ENCODE measurements at regions of chr16 and their contacts with region 1.

Region 1: DNA sequence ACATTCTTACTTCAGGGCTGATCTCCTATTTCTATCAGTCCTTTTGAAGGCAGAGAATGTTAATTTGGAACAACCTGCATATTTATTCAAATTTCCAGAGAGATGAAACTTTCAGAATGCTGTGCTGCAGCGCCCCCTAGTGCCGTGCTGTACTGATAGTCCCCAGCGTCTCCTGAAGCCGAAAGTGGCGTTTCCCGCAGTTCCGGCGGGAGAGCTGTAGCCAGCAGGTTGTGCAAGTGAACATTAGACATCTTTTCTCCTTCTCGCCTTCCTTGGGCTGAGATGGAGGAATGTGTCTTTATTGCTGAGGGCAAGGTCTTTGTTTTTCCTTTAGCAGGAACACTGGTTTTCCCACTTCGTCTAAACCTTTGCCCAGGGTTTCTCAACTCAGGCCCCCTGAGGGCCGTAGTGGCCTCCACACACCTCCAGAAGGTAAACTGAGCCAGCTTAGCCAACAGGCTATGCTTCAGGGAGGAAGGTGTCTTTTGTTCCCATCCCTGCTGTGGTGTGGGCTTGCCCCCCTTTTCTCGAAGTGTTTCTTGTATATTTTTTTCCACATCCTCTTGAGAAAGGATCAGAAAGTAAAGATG is 26.4 kb downstream of the USP10 start:
- DNase-seq: peak; percentile 92
- ATAC-seq: peak; percentile 60
- H3K4me3 Mint-ChIP-seq: peak overlapping the region; percentile 48
- H3K27ac Mint-ChIP-seq: peak overlapping the region; percentile 58
- H3K4me1 Mint-ChIP-seq: peaks cover 83% of the 10 kb centered on the region
- H3K27me3 Mint-ChIP-seq: no peaks in the 10 kb centered on the region

Region 2: GRCh38 chr16:84277237-84277823 is 448.8 kb before region 1 on chr16:
- CTCF ChIA-PET with region 1: interaction called, 3 read pairs
- POLR2A ChIA-PET with region 1: no interaction called
- intact Hi-C with region 1: loop called in 1 of 2 experiments (anchors 5 kb)
- DNase-seq: peak; percentile 86
- ATAC-seq: peak; percentile 73
- H3K4me3 Mint-ChIP-seq: no peak overlapping the region
- H3K27ac Mint-ChIP-seq: no peak overlapping the region
- H3K4me1 Mint-ChIP-seq: no peaks in the 10 kb centered on the region
- H3K27me3 Mint-ChIP-seq: peaks cover 2% of the 10 kb centered on the region

Region 3: GRCh38 chr16:84487358-84487757 is 238.8 kb before region 1 on chr16:
- CTCF ChIA-PET with region 1: no interaction called
- POLR2A ChIA-PET with region 1: no interaction called
- intact Hi-C with region 1: no loop called
- DNase-seq: no peak
- ATAC-seq: no peak
- H3K4me3 Mint-ChIP-seq: no peak overlapping the region
- H3K27ac Mint-ChIP-seq: no peak overlapping the region
- H3K4me1 Mint-ChIP-seq: no peaks in the 10 kb centered on the region
- H3K27me3 Mint-ChIP-seq: no peaks in the 10 kb centered on the region

Region 4: DNA sequence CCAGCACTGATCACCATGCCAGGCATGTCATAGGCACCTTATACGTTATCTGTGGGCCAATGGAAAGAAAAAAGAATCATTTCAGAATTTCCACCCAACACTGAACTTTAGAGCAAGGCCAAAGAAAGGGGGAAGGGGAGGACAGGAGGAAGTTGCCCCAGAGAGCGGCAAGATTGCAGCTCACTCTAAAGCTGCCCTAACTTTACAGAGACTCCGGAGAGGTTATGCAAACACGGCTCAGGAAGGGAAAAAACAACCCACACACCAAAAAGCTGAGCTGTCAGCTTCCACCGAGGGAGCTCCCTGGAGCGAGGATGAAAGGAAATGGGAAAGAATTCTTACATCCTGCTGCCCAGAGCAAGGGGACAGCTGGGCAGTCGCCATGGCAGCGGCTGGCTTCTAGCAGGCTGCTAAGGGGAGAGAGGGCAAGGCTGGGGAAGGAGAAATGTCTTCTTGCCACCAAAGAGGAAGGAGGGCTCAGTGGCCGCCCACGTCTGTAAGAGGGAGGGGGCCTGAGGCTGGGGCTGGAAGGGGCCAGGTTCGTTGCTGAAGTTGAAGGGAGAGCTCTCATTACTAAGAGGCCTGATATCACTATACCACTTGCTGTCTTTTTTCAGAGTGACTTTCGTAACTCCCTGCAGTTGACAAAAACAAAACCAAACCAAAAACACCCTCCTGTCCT is 126.5 kb before region 1 on chr16:
- CTCF ChIA-PET with region 1: interaction called, 10 read pairs
- POLR2A ChIA-PET with region 1: no interaction called
- intact Hi-C with region 1: no loop called
- DNase-seq: peak; percentile 90
- ATAC-seq: peak; percentile 58
- H3K4me3 Mint-ChIP-seq: peak overlapping the region; percentile 74
- H3K27ac Mint-ChIP-seq: peak overlapping the region; percentile 97
- H3K4me1 Mint-ChIP-seq: peaks cover 94% of the 10 kb centered on the region
- H3K27me3 Mint-ChIP-seq: no peaks in the 10 kb centered on the region

Region 5: GRCh38 chr16:84672276-84673202 is 53.6 kb before region 1 on chr16:
- CTCF ChIA-PET with region 1: interaction called, 80 read pairs
- POLR2A ChIA-PET with region 1: no interaction called
- intact Hi-C with region 1: loop called (anchors 1 kb)
- DNase-seq: peak; percentile 91
- ATAC-seq: peak; percentile 96
- H3K4me3 Mint-ChIP-seq: no peak overlapping the region
- H3K27ac Mint-ChIP-seq: no peak overlapping the region
- H3K4me1 Mint-ChIP-seq: peaks cover 7% of the 10 kb centered on the region
- H3K27me3 Mint-ChIP-seq: peaks cover 3% of the 10 kb centered on the region

Region 6: DNA sequence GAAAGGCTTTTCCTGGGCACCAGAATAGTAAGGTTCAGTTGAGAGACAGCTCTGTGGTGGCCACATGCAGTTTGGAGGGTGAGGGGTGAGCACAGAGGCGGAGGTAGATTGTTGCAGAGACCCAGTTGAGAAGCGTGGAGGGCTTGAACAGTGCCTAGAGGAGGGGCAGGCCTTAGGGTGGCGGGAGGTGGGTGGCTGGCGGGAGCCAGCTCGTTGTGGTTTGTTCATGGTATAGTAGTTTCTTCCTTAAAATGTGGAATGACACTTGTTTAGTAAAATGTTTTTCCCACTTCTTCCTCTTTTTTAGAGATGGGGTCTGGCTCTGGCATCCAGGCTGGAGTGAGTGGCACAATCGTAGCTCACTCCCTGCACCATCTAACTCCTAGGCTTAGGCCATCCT is 12.1 kb before region 1 on chr16:
- CTCF ChIA-PET with region 1: interaction called, 56 read pairs
- POLR2A ChIA-PET with region 1: interaction called, 4 read pairs
- intact Hi-C with region 1: no loop called
- DNase-seq: no peak
- ATAC-seq: no peak
- H3K4me3 Mint-ChIP-seq: no peak overlapping the region
- H3K27ac Mint-ChIP-seq: no peak overlapping the region
- H3K4me1 Mint-ChIP-seq: peaks cover 67% of the 10 kb centered on the region
- H3K27me3 Mint-ChIP-seq: no peaks in the 10 kb centered on the region

Region 7: GRCh38 chr16:85082173-85083050 is 356.2 kb after region 1 on chr16:
- CTCF ChIA-PET with region 1: no interaction called
- POLR2A ChIA-PET with region 1: no interaction called
- intact Hi-C with region 1: no loop called
- DNase-seq: no peak
- ATAC-seq: no peak
- H3K4me3 Mint-ChIP-seq: no peak overlapping the region
- H3K27ac Mint-ChIP-seq: no peak overlapping the region
- H3K4me1 Mint-ChIP-seq: peaks cover 17% of the 10 kb centered on the region
- H3K27me3 Mint-ChIP-seq: no peaks in the 10 kb centered on the region

Region 8: GRCh38 chr16:85305996-85306792 is 580.0 kb after region 1 on chr16:
- CTCF ChIA-PET with region 1: no interaction called
- POLR2A ChIA-PET with region 1: no interaction called
- intact Hi-C with region 1: no loop called
- DNase-seq: peak; percentile 95
- ATAC-seq: peak; percentile 94
- H3K4me3 Mint-ChIP-seq: no peak overlapping the region
- H3K27ac Mint-ChIP-seq: peak overlapping the region; percentile 89
- H3K4me1 Mint-ChIP-seq: peaks cover 55% of the 10 kb centered on the region
- H3K27me3 Mint-ChIP-seq: no peaks in the 10 kb centered on the region